ENCODE measurements at regions of chr12 and their contacts with region 1.

Region 1: DNA sequence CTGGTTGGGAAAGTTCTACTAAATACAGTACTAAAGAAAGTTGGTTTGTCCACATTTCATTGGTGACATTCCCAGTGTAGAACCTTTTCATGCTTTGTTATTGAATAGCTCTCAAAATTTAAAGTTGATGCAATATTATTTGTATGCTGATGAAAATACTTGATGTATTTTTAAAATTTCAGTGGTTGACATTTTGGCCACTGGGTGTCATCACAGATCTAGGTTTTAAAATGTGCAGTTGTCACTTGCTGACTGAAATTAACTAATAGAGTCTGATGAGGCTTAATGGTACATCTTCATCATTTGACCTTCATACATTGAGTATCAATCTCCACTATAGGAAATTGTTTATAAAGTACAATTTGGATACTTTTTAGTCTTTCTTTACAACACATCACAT is 37.1 kb downstream of the CMAS start:
- DNase-seq: no peak
- ATAC-seq: peak; percentile 58

Region 2: DNA sequence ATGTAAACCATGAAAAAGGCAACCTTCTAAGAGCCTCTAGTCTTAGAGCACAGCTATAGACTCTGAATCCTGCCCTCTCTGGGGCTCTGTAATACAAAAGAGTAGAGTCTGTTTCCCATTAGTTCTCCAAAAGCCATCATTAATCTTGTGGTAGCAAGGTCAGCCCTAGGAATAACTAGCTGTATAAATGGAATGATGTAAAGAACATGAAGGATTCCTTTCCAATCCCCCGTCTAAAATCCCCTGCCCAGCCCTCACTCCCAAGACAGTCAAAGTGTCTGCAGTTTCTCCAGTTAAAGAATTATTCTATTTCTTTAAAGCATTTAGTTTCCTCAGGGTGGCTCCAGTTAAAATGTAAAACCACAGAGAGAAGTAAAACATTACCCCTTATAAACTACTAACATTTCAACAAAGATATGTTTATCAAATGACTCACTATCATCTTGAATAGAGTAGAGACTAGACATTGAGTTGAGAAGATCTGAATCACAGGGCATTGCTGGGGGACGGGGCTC is 147.2 kb after region 1 on chr12:
- intact Hi-C with region 1: no loop called
- DNase-seq: no peak
- ATAC-seq: no peak

Region 3: DNA sequence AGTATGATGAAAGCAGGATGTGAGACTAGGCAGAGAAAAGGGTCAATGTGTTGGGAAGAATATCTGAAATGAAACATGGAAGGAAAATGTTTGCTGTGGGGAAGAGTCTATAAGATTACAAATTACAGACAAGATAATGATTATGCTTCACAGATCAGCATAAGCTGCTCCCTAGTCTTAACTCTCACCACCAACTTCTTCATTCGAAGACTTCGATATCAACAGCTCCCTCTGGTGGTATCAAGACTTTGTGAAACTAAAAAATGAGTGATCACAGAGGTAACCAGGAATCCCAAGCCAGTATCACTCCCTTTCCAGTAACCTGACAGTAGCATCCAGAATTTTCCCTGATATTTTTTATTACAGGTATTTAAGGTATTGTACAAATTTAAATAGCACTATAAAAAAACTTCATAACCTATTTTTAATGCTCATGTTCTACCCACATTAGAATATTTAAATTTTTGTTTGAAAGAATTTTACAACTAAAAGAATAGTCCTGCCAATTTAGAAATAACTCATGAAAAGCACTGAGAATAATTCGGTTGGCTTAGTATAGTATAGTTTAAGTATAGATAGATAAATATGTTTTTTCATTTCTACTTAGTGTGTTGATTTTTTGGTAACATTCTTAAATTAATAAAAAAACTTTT is 376.8 kb after region 1 on chr12:
- intact Hi-C with region 1: loop called (anchors 5 kb)
- DNase-seq: no peak
- ATAC-seq: peak; percentile 68

Measured in Right ventricle myocardium superior (tissue), 1 donor.